GM12878 (cell line): ENCODE measurements at regions of chr1 and their contacts with region 1.

Region 1: GRCh38 chr1:159891275-159892157 is 8.4 kb downstream of the CFAP45 start:
- DNase-seq: peak; percentile 83
- ATAC-seq: peak; percentile 89
- H3K4me3 ChIP-seq: no peak overlapping the region
- H3K27ac ChIP-seq: no peak overlapping the region
- H3K4me1 ChIP-seq: peaks cover 19% of the 10 kb centered on the region
- H3K27me3 ChIP-seq: 0 out of 4 replicates have a peak, but pooled peaks cover 0 to 2% of the 10 kb centered on the region in 2 experiments
- CTCF ChIP-seq: peak; percentile 97 to 100 (median 99); a peak in 5 of 6 replicates
- EP300 ChIP-seq: no peak
- POLR2A ChIP-seq: no peak
- RAD21 ChIP-seq: peak; percentile 99

Region 2: DNA sequence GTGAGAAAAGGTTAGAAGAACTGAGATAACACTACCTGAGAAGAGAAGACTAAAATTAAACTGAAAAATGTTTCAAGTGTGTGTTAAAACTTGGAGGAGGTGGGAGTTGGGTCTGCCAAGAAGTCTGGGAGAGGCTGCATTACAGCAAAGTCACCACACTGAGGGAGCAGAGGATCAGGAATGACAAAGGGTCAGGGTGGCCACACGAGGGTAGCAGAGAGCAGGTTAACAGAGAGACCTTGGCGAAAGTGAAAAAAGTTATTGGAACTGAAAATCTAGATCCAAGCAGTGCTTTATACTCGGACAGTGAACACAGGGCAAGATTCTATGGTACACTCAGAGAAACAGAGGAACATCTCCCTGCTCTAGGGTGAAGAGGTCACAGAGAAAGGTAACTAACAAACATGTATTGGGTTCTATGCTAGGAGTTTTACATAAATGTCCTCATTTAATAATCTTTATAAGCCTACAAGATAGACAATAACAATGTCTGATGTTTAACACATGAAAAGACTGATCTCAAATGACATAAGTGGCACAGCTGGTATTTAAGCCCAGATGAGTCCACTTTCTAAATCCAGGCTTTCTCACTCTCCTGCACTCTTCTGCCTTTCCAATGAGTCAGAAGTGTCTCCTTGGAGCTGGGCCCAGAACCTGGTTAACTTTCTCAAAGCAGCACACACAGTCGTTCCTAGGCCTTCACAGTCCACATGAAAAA is 730.4 kb before region 1 on chr1:
- CTCF ChIA-PET with region 1: no interaction called
- POLR2A ChIA-PET with region 1: no interaction called
- RAD21 ChIA-PET with region 1: no interaction called
- SMC1A ChIA-PET with region 1: no interaction called
- in situ Hi-C with region 1: no loop called
- intact Hi-C with region 1: loop called (anchors 1 kb)
- DNase-seq: peak; percentile 51
- ATAC-seq: peak; percentile 99
- H3K4me3 ChIP-seq: no peak overlapping the region
- H3K27ac ChIP-seq: no peak overlapping the region
- H3K4me1 ChIP-seq: peaks cover 3% of the 10 kb centered on the region; the same call in 1 of the 2 replicates
- H3K27me3 ChIP-seq: peaks cover 0 to 2% of the 10 kb centered on the region in 2 experiments; a peak in 1 of 4 replicates
- CTCF ChIP-seq: peak; percentile 94 to 100 (median 99); a peak in 5 of 6 replicates
- EP300 ChIP-seq: no peak
- POLR2A ChIP-seq: no peak
- RAD21 ChIP-seq: peak; percentile 100

Region 3: GRCh38 chr1:159790237-159790917 is 101.1 kb before region 1 on chr1:
- CTCF ChIA-PET with region 1: interaction called, 476 read pairs
- POLR2A ChIA-PET with region 1: no interaction called
- RAD21 ChIA-PET with region 1: interaction called, 153 read pairs
- SMC1A ChIA-PET with region 1: interaction called, 289 read pairs
- in situ Hi-C with region 1: loop called (anchors 5 kb)
- intact Hi-C with region 1: no loop called
- DNase-seq: no peak
- ATAC-seq: peak; percentile 51; the same call in 2 of the 3 replicates
- H3K4me3 ChIP-seq: no peak overlapping the region
- H3K27ac ChIP-seq: no peak overlapping the region
- H3K4me1 ChIP-seq: no peaks in the 10 kb centered on the region
- H3K27me3 ChIP-seq: peaks cover under 1 to 5% of the 10 kb centered on the region in 2 experiments; a peak in 2 of 4 replicates
- CTCF ChIP-seq: peak; percentile 54 to 67 (median 64)
- EP300 ChIP-seq: no peak
- POLR2A ChIP-seq: no peak
- RAD21 ChIP-seq: peak; percentile 58

Region 4: GRCh38 chr1:159821171-159821867 is 70.2 kb before region 1 on chr1:
- CTCF ChIA-PET with region 1: interaction called, 42 read pairs
- POLR2A ChIA-PET with region 1: no interaction called
- RAD21 ChIA-PET with region 1: interaction called, 4 read pairs
- SMC1A ChIA-PET with region 1: interaction called, 35 read pairs
- in situ Hi-C with region 1: no loop called
- intact Hi-C with region 1: loop called (anchors 2 kb)
- DNase-seq: no peak
- ATAC-seq: peak; percentile 74
- H3K4me3 ChIP-seq: no peak overlapping the region
- H3K27ac ChIP-seq: no peak overlapping the region
- H3K4me1 ChIP-seq: peaks cover 6% of the 10 kb centered on the region
- H3K27me3 ChIP-seq: peaks cover 0 to 4% of the 10 kb centered on the region in 2 experiments; a peak in 2 of 4 replicates
- CTCF ChIP-seq: peak; percentile 53 to 68 (median 66)
- EP300 ChIP-seq: no peak
- POLR2A ChIP-seq: no peak
- RAD21 ChIP-seq: peak; percentile 30; the same call in 1 of the 2 replicates

Region 5: DNA sequence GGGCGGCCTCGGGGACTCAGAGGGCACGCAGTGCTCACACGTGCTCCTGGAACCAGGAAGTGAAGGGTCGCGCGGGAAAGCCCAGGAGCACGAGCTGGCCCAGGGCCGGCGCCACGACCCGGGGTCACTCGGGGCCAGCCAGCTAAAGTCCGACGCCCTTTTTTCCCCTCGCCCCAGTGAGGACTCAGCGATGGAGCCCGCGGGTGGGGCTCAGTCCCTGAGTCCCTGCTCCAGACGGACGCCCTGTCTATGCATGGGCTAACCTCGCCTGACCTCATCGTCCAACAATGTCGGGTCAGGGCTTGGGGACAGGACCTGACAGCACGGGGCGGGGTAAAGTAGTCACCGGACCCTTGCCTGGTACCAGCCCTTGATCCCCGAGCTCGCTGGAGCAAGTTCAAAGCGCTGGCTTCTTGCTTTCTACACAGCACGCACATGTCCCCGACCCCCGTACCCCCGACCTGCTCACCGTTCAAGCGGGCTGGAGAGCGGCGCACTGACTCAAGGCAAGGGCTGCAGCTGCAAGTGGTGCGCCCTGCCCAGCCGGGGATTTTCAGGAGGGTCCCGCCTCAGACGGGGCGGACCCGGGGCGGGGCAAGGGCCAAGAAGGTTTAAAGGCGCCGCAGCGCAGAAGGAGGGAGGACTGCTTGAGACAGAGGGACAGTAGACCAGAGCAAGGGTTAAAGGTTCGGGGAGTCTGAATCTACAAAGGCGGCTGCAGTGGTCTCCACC is 33.6 kb after region 1 on chr1 and contains the start of gene TAGLN2:
- CTCF ChIA-PET with region 1: interaction called, 37 read pairs
- POLR2A ChIA-PET with region 1: interaction called, 25 read pairs
- RAD21 ChIA-PET with region 1: interaction called, 94 read pairs
- SMC1A ChIA-PET with region 1: interaction called, 83 read pairs
- in situ Hi-C with region 1: no loop called
- intact Hi-C with region 1: no loop called
- DNase-seq: peak; percentile 60
- ATAC-seq: peak; percentile 73
- H3K4me3 ChIP-seq: peak within 1 kb of the TSS; percentile 82
- H3K27ac ChIP-seq: peak within 1 kb of the TSS; percentile 82
- H3K4me1 ChIP-seq: peaks cover 32% of the 10 kb centered on the region
- H3K27me3 ChIP-seq: no peaks in the 10 kb centered on the region
- CTCF ChIP-seq: no peak
- EP300 ChIP-seq: no peak
- POLR2A ChIP-seq: peak; percentile 99
- RAD21 ChIP-seq: no peak
- polyA plus RNA-seq, gene TAGLN2: 216 to 262 TPM

Region 6: DNA sequence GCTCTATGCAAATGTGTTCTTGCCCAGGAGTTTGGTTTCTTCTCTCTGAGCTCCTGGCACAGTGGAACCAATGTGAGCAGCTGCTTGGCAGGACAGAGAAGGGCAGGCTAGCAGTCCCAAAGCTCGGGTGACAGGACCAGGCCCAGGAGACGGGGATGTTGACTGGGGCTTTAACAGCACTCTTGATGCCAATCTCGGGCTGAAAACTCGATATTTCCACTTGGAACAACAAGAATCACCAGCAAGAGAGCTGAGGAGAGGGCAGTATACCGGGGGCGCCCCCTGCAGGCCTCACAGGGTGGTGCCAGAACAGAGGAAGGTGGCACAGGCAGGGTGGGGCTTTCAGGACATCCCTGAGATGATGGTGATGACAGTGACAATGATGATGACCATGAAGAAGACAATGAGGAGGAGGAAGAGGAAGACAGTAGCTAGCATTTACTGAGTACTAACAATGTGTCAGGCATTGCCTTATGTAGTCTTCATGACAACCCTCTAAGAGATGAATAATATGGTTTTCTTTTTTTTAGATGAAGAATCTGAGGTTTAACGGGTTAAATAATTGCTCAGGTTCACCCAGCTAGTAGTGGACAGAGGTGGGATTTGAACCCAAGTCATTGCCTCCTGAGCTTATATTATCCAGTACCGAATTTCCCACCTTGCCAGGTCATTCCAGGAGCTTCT is 187.1 kb after region 1 on chr1:
- CTCF ChIA-PET with region 1: interaction called, 12 read pairs
- POLR2A ChIA-PET with region 1: no interaction called
- RAD21 ChIA-PET with region 1: interaction called, 3 read pairs
- SMC1A ChIA-PET with region 1: no interaction called
- in situ Hi-C with region 1: no loop called
- intact Hi-C with region 1: no loop called
- DNase-seq: no peak
- ATAC-seq: peak; percentile 96
- H3K4me3 ChIP-seq: no peak overlapping the region
- H3K27ac ChIP-seq: no peak overlapping the region
- H3K4me1 ChIP-seq: no peaks in the 10 kb centered on the region; the same call in 1 of the 2 replicates
- H3K27me3 ChIP-seq: peaks cover 0 to 2% of the 10 kb centered on the region in 2 experiments; a peak in 3 of 4 replicates
- CTCF ChIP-seq: peak; percentile 78 to 97 (median 92)
- EP300 ChIP-seq: no peak
- POLR2A ChIP-seq: no peak
- RAD21 ChIP-seq: peak; percentile 78